ENCODE measurements at regions of chr7 and their contacts with region 1.

Region 1: DNA sequence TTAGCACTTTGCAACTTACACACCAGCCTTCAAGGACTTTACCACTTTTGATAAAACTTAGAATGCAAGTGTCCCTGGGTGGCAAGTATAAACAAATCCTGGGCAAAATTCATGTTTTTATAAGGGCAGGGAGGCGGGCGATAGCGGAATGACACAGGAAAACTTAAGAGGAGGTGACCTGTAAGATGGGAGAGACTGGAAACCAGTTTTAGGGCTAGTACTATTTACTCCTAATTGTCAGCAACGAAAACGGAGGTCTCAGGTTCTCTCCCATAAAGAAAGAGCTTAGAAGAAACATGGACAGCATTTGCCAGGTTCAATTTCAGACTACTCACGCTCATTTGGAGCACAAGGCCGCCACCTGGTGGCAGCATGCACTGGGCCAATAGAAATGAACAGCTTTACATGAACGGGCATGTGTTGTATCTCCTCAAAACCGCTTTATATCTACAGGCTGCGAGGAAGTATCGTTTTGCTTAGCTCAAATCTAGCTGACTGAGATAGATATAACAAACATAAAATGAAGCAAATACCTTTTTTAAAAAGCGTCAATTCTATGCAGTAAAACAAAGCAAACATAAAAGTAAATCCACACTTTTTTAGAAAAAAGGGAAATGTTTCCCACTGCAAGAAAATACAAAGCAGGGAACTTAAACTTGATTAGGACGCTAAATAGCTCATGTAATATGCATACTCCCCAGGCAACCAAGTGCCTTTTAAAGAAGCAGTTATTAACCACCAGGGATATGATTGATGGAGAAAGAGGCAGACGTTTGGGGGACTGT is 37.6 kb upstream of the SVOPL start:
- H3K4me3 Mint-ChIP-seq: no peak overlapping the region
- H3K27ac Mint-ChIP-seq: no peak overlapping the region
- H3K4me1 Mint-ChIP-seq: peaks cover 5% of the 10 kb centered on the region
- H3K27me3 Mint-ChIP-seq: no peaks in the 10 kb centered on the region

Region 2: DNA sequence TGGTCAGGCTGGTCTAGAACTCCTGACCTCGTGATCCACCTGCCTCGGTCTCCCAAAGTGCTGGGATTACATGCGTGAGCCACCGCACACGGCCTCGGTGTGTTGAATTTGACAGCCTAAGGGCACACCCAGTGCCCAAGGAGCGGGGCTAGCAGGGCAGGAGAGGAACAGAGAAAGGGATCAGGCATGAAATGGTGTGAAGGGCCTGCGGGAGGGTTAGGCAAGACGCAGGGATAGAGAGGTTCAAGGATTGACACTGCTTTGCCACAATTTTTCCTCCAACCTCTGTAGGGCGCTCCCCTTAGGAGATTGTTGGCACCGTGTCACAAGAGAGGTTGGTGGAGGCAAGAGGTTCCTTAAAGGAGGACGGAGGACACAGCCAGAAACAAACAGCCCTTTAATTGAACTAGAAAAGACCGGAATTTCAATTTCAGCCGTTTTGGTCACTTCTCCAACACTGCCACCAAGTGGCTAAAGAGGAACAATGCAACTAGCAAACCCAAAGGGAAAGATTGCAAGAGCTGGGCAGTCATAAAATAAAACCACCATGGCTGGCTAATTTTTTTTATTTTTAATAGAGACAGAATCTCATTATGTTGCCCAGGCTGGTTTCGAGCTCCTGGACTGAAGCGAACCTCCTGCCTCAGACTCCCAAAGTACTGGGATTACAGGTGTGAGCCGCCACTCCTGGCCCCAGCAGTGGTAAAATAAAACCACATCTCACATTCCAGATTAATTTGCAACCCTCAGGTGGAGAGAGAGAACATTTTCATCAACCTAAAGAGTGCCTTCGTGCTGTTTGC is 730.0 kb before region 1 on chr7:
- intact Hi-C with region 1: loop called (anchors 5 kb)
- H3K4me3 Mint-ChIP-seq: no peak overlapping the region
- H3K27ac Mint-ChIP-seq: peak overlapping the region; percentile 44
- H3K4me1 Mint-ChIP-seq: peaks cover 14% of the 10 kb centered on the region
- H3K27me3 Mint-ChIP-seq: no peaks in the 10 kb centered on the region

Region 3: GRCh38 chr7:138097064-138097741 is 641.5 kb before region 1 on chr7:
- intact Hi-C with region 1: loop called (anchors 1 kb)
- H3K4me3 Mint-ChIP-seq: no peak overlapping the region
- H3K27ac Mint-ChIP-seq: no peak overlapping the region
- H3K4me1 Mint-ChIP-seq: no peaks in the 10 kb centered on the region
- H3K27me3 Mint-ChIP-seq: no peaks in the 10 kb centered on the region

Region 4: GRCh38 chr7:138161600-138162081 is 577.1 kb before region 1 on chr7:
- intact Hi-C with region 1: loop called (anchors 1 kb)
- H3K4me3 Mint-ChIP-seq: no peak overlapping the region
- H3K27ac Mint-ChIP-seq: no peak overlapping the region
- H3K4me1 Mint-ChIP-seq: no peaks in the 10 kb centered on the region
- H3K27me3 Mint-ChIP-seq: no peaks in the 10 kb centered on the region

Region 5: GRCh38 chr7:138608275-138608674 is 130.5 kb before region 1 on chr7:
- intact Hi-C with region 1: no loop called
- H3K4me3 Mint-ChIP-seq: no peak overlapping the region
- H3K27ac Mint-ChIP-seq: no peak overlapping the region
- H3K4me1 Mint-ChIP-seq: peaks cover 14% of the 10 kb centered on the region
- H3K27me3 Mint-ChIP-seq: no peaks in the 10 kb centered on the region

Measured in dendritic cell treated with granulocyte-macrophage colony-stimulating factor and Interleukin-4, amounts not matched to agents 40 ng/mL and 50 ng/mL, for 4 days (primary cell).